ENCODE measurements at regions of chr9 and their contacts with region 1.

Region 1: DNA sequence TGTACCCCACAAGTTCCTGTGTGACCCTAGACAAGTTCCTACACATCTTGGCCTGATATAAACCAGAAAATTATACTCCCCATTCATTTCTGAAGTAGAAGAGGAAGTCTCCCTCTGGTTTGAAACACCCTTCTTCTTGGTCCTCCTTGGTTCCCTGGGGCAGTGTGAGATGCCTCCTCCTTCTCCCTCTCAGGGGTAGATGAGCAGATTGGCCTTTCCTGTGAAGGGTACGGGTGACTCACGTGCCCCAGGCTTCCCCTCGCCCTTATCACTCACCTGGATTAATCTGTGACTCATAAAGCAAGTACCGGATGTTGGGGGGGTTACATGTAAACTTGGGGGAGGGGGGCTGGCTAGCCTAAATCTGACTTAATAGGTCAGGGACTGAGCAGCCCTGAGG is 11.1 kb upstream of the AQP3 start:
- DNase-seq: peak in 13 of 14 experiments; percentile 47 to 87 (median 66)
- ATAC-seq: peak; percentile 81
- H3K4me3 ChIP-seq: no peak overlapping the region
- H3K4me3 Mint-ChIP-seq: peak overlapping the region; percentile 81
- H3K27ac ChIP-seq: peak overlapping the region; percentile 75 to 80
- H3K27ac Mint-ChIP-seq: peak overlapping the region; percentile 91
- H3K4me1 ChIP-seq: peaks cover 67% of the 10 kb centered on the region
- H3K4me1 Mint-ChIP-seq: peaks cover 48% of the 10 kb centered on the region
- H3K27me3 ChIP-seq: no peaks in the 10 kb centered on the region
- H3K27me3 Mint-ChIP-seq: no peaks in the 10 kb centered on the region
- CTCF ChIP-seq: no peak

Region 2: GRCh38 chr9:33446946-33447798 is 11.3 kb before region 1 on chr9 and contains the start of gene AQP3:
- CTCF ChIA-PET with region 1: interaction called, 24 read pairs
- POLR2A ChIA-PET with region 1: interaction called, 20 read pairs
- intact Hi-C with region 1: loop called in 1 of 2 experiments (anchors 1 kb)
- DNase-seq: peak; percentile 63 to 89 (median 75)
- ATAC-seq: peak; percentile 51
- H3K4me3 ChIP-seq: peak within 1 kb of the TSS; percentile 90
- H3K4me3 Mint-ChIP-seq: peak within 1 kb of the TSS; percentile 97
- H3K27ac ChIP-seq: peak within 1 kb of the TSS; percentile 83 to 91
- H3K27ac Mint-ChIP-seq: peak within 1 kb of the TSS; percentile 99
- H3K4me1 ChIP-seq: peaks cover 69% of the 10 kb centered on the region
- H3K4me1 Mint-ChIP-seq: peaks cover 52% of the 10 kb centered on the region
- H3K27me3 ChIP-seq: no peaks in the 10 kb centered on the region
- H3K27me3 Mint-ChIP-seq: no peaks in the 10 kb centered on the region
- CTCF ChIP-seq: peak; percentile 53
- total RNA-seq, gene AQP3: 99.8 to 106 TPM